ENCODE measurements at regions of chr2 and their contacts with region 1.

Region 1: DNA sequence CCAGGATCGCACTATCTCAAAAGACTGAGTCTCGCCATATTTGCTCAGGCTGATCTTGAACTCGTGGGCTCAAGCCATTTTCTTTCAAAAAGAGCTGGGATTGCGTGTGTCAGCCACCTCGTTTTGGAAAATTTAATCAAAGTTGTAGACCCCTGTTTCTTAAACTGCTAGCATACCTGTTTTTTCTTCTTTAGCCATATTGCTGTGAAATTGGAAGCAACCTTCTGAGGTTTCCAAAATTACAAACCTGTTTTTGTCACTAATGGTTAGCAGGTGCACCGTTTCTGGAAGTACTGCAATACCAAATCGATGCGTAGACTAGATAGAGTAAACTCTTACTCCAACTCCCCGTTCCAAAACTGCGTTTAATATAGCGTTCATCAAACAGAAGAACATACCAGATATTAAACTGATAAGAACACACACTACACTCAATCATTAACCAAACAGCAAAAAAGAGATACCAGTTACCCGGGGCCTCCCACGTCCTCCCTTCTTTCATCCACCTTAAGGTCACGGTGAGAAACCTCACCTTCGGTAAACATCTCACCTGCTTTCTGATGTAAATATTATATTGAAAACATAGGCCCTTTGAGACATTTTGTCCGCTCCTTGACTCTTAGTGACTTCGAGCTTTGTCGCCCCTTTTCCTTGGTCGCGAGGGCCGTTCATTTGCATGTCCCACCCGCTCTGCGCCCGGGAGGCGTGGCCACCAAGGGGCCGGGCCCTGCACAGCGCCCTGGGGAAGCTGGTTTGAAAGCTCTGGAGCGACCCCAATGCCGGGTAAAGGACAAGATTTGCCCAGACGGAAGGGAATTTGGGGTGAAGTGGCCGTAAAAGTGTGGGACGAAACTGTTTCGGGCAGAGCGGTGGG is at the start of gene RNU2-63P:
- DNase-seq: peak; percentile 82
- ATAC-seq: peak; percentile 72
- H3K4me3 Mint-ChIP-seq: peak within 1 kb of the TSS; percentile 98
- H3K27ac Mint-ChIP-seq: peak within 1 kb of the TSS; percentile 100
- H3K4me1 Mint-ChIP-seq: peaks cover 31% of the 10 kb centered on the region
- H3K27me3 Mint-ChIP-seq: no peaks in the 10 kb centered on the region
- CTCF ChIP-seq: no peak
- total RNA-seq, gene RNU2-63P: 9.7 and 19.5 TPM in 2 replicates

Region 2: DNA sequence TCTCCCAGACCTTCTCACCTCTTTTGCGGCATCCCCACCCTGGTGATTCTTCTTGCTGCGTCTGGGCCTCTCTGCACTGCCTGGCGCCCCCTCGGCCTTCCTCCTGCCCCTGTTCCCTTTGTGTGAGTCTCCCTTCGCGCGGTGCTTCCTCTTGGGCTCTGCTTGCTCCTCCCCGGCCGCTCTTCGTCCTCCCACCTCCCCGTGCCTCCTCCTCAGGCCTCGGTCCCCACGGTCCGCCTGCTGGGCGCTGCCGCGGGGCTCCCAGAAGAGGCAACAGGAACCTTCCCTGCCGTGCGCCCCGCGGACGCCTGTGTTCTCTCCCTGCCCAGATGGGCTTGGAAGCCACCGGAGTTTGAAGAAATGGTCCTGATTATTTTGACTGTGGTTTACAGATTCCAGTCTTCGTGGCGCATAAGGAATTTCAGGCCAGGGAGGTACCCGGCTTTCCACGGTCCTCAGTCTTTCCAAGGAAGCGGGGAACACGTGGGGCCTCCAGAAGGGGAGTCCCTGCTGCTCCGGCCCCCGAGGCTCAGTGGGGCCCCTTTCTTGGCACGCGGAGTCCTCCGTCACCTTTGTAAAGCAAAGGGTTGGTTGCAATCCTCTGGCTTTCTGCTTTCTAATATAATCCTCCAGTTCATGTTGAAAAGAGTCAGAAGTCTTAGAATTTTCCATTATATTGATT is 13.1 kb before region 1 on chr2:
- CTCF ChIA-PET with region 1: interaction called, 5 read pairs
- POLR2A ChIA-PET with region 1: interaction called, 22 read pairs
- intact Hi-C with region 1: no loop called
- DNase-seq: no peak
- ATAC-seq: no peak
- H3K4me3 Mint-ChIP-seq: no peak overlapping the region
- H3K27ac Mint-ChIP-seq: peak overlapping the region; percentile 73
- H3K4me1 Mint-ChIP-seq: peaks cover 13% of the 10 kb centered on the region
- H3K27me3 Mint-ChIP-seq: no peaks in the 10 kb centered on the region
- CTCF ChIP-seq: no peak

Region 3: GRCh38 chr2:88027697-88028389 is 11.5 kb after region 1 on chr2:
- CTCF ChIA-PET with region 1: no interaction called
- POLR2A ChIA-PET with region 1: interaction called, 42 read pairs
- intact Hi-C with region 1: loop called (anchors 1 kb)
- DNase-seq: no peak
- ATAC-seq: peak; percentile 52
- H3K4me3 Mint-ChIP-seq: peak overlapping the region; percentile 73
- H3K27ac Mint-ChIP-seq: peak overlapping the region; percentile 85
- H3K4me1 Mint-ChIP-seq: peaks cover 21% of the 10 kb centered on the region
- H3K27me3 Mint-ChIP-seq: no peaks in the 10 kb centered on the region
- CTCF ChIP-seq: no peak

Region 4: GRCh38 chr2:88036182-88036581 is 19.9 kb after region 1 on chr2:
- CTCF ChIA-PET with region 1: no interaction called
- POLR2A ChIA-PET with region 1: interaction called, 12 read pairs
- intact Hi-C with region 1: no loop called
- DNase-seq: no peak
- ATAC-seq: no peak
- H3K4me3 Mint-ChIP-seq: no peak overlapping the region
- H3K27ac Mint-ChIP-seq: no peak overlapping the region
- H3K4me1 Mint-ChIP-seq: peaks cover 38% of the 10 kb centered on the region
- H3K27me3 Mint-ChIP-seq: no peaks in the 10 kb centered on the region
- CTCF ChIP-seq: no peak

Region 5: DNA sequence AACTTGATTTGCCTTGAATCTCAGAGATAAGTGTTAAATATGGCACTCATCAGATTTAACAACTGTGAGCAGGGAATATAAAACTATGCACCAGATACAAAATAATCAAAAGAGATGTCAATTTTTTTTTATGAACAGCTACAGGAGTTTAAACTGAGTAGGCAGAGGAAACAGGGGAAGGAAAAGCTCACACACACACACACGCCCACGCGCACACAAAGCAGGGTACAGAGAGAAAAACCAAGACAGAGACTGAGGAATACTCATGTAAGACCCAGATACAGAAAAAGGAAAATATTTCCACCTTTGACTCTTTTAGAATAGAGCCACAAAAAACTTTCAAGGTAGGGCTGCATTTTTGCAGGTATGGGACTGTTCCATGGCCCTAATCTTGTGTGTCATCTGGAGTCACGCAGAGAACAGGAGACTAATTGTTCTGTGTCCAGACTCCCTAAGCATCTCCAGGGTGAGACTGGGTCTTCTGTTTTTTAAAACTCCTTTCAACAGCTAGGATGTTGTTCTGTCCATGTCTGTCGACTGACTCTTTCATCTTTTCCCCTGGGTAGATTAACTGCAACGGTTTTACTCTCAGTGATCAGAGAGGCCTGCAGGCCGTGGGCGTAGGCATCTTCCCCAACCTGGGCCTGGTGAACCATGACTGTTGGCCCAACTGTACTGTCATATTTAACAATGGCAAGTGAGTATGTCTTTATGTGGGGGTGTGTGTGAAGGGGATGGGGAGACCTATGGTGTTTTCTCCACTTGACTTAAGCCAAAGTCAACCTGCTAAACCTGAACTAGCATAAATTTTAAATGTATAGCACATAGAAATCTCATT is 74.3 kb after region 1 on chr2:
- CTCF ChIA-PET with region 1: no interaction called
- POLR2A ChIA-PET with region 1: no interaction called
- intact Hi-C with region 1: no loop called
- DNase-seq: no peak
- ATAC-seq: no peak
- H3K4me3 Mint-ChIP-seq: no peak overlapping the region
- H3K27ac Mint-ChIP-seq: no peak overlapping the region
- H3K4me1 Mint-ChIP-seq: peaks cover 15% of the 10 kb centered on the region
- H3K27me3 Mint-ChIP-seq: no peaks in the 10 kb centered on the region
- CTCF ChIP-seq: no peak

Region 6: GRCh38 chr2:88181511-88181910 is 165.2 kb after region 1 on chr2:
- CTCF ChIA-PET with region 1: no interaction called
- POLR2A ChIA-PET with region 1: no interaction called
- intact Hi-C with region 1: no loop called
- DNase-seq: no peak
- ATAC-seq: no peak
- H3K4me3 Mint-ChIP-seq: no peak overlapping the region
- H3K27ac Mint-ChIP-seq: peak overlapping the region; percentile 20
- H3K4me1 Mint-ChIP-seq: peaks cover 20% of the 10 kb centered on the region
- H3K27me3 Mint-ChIP-seq: peaks cover 5% of the 10 kb centered on the region
- CTCF ChIP-seq: no peak

Region 7: DNA sequence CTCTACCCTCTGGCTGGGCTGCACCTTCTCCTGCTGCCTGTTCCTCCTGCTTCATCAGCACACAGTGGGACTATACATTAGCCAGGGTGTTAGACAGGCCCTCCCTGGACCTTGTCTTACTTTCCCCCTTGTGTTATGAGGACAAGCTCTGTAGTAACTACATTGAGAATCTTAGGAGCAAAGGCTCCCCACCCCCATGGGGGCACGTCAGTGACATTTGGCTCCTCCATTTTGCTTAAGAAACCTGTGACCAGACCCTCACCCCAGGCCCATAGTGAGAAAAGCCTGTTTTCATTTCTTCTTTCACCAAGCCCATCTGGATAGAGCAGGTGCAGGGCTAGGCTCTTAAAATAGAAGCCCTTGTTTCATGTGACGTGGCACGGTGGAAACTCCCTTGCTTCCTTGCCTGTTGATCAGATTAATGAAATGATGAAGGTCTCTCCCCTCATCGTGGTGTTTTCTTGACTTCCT is 821.9 kb after region 1 on chr2:
- CTCF ChIA-PET with region 1: no interaction called
- POLR2A ChIA-PET with region 1: no interaction called
- intact Hi-C with region 1: no loop called
- DNase-seq: peak; percentile 47
- ATAC-seq: peak; percentile 83
- H3K4me3 Mint-ChIP-seq: peak overlapping the region; percentile 60
- H3K27ac Mint-ChIP-seq: peak overlapping the region; percentile 97
- H3K4me1 Mint-ChIP-seq: peaks cover 90% of the 10 kb centered on the region
- H3K27me3 Mint-ChIP-seq: no peaks in the 10 kb centered on the region
- CTCF ChIP-seq: no peak

Region 8: GRCh38 chr2:88950010-88950409 is 933.7 kb after region 1 on chr2:
- CTCF ChIA-PET with region 1: no interaction called
- POLR2A ChIA-PET with region 1: no interaction called
- intact Hi-C with region 1: no loop called
- DNase-seq: no peak
- ATAC-seq: no peak
- H3K4me3 Mint-ChIP-seq: no peak overlapping the region
- H3K27ac Mint-ChIP-seq: no peak overlapping the region
- H3K4me1 Mint-ChIP-seq: peaks cover 6% of the 10 kb centered on the region
- H3K27me3 Mint-ChIP-seq: peaks cover 2% of the 10 kb centered on the region
- CTCF ChIP-seq: no peak